CD4-positive, alpha-beta T cell (primary cell): ENCODE measurements at regions of chrX and their contacts with region 1.

Region 1: DNA sequence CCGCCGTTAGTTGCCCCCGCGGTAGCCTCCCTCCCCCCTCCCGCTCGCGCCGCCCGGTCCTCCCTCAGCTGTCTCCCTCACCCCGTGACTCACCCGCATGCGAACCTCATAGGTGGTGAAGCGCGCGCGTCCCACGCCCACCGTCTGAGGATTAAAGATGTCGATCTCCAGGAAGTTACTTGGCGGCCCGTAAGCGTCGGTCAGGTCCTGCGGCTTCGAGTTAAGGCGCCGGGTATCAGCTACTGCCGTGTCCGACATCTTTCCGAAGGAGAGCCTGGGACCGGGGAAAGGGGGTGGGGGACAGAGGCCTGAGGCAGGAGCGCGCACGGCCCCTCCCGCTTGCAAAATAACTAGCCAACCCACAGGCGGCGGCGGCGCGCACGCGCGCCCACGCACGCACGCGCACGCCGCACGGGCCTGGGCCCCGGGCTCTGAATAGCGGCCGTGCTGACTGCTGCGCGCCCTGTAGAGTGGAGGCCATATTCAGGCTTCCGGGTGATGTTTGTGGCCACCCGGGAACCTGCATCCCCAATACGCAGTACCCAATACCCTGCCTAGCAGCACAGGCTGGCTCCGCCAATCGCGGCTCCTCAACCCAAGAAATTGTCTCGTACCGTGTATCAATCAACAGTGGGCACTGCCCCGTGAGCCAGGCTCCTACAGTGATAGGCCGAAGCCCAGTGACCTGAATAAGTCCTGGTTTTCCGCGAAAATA is at the start of gene SNX12:
- DNase-seq: peak; percentile 73 to 95 (median 84)
- ATAC-seq: peak; percentile 91
- H3K4me3 ChIP-seq: peak within 1 kb of the TSS; percentile 73
- H3K4me3 Mint-ChIP-seq: peak within 1 kb of the TSS; percentile 98
- H3K27ac ChIP-seq: peak within 1 kb of the TSS; percentile 77 to 89
- H3K27ac Mint-ChIP-seq: peak within 1 kb of the TSS; percentile 100
- H3K4me1 ChIP-seq: peaks cover 10% of the 10 kb centered on the region
- H3K4me1 Mint-ChIP-seq: peaks cover 28% of the 10 kb centered on the region
- H3K27me3 ChIP-seq: no peaks in the 10 kb centered on the region
- H3K27me3 Mint-ChIP-seq: no peaks in the 10 kb centered on the region
- CTCF ChIP-seq: no peak
- total RNA-seq, gene SNX12: 20.5 to 22.4 TPM

Region 2: GRCh38 chrX:71111141-71111843 is 43.1 kb after region 1 on chrX and contains the start of gene IL2RG:
- CTCF ChIA-PET with region 1: no interaction called
- POLR2A ChIA-PET with region 1: interaction called, 11 read pairs
- intact Hi-C with region 1: no loop called
- DNase-seq: peak; percentile 56 to 94 (median 70)
- ATAC-seq: peak; percentile 81
- H3K4me3 ChIP-seq: peak within 1 kb of the TSS; percentile 93
- H3K4me3 Mint-ChIP-seq: peak within 1 kb of the TSS; percentile 98
- H3K27ac ChIP-seq: peak within 1 kb of the TSS; percentile 96 to 99
- H3K27ac Mint-ChIP-seq: peak within 1 kb of the TSS; percentile 99
- H3K4me1 ChIP-seq: peaks cover 56% of the 10 kb centered on the region
- H3K4me1 Mint-ChIP-seq: peaks cover 51% of the 10 kb centered on the region
- H3K27me3 ChIP-seq: no peaks in the 10 kb centered on the region
- H3K27me3 Mint-ChIP-seq: no peaks in the 10 kb centered on the region
- CTCF ChIP-seq: no peak
- total RNA-seq, gene IL2RG: 213 to 225 TPM

Region 3: DNA sequence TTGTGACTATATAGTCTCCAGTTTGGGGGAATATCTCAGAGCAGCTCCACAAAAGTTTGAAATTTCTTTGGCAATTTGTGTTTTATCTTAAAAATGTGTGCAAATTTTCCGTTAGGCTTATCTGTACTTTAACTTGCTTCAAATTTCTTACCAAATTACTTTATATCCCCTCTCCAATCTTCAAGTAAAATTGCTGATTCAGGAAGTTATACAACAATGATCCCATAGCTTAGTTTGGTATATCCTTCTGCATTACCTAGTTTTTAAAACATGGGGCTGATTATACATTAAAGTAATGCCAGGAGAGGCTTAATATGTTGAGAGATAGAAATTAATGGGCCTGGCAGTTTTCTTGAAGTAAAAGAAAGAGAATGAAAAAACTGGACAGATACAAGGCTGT is 364.5 kb after region 1 on chrX:
- CTCF ChIA-PET with region 1: no interaction called
- POLR2A ChIA-PET with region 1: no interaction called
- intact Hi-C with region 1: no loop called
- DNase-seq: no peak
- ATAC-seq: no peak
- H3K4me3 ChIP-seq: no peak overlapping the region
- H3K4me3 Mint-ChIP-seq: no peak overlapping the region
- H3K27ac ChIP-seq: no peak overlapping the region
- H3K27ac Mint-ChIP-seq: no peak overlapping the region
- H3K4me1 ChIP-seq: no peaks in the 10 kb centered on the region
- H3K4me1 Mint-ChIP-seq: no peaks in the 10 kb centered on the region
- H3K27me3 ChIP-seq: no peaks in the 10 kb centered on the region
- H3K27me3 Mint-ChIP-seq: no peaks in the 10 kb centered on the region
- CTCF ChIP-seq: no peak